Gastrocnemius medialis (tissue), 4 donors: ENCODE measurements at regions of chr1 and their contacts with region 1.

Region 1: DNA sequence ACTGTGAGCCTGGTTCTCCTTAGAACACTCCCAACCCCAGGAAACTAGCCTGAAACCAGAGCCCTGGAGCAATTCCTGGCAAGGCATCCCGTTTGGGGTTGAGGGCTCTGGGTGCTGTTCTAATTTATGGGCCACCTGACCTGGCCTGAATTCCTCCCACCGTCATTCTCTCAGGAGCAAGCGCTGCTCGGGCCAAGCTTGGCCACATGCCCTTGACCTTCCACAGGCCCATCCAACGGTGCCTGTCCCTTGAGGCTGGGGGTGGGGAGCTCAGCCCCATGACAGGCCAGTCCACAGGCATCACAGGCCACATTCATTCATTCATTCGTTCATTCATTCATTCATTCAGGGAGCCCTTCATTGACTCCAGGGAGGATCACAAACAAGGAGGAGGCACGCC is 5.3 kb downstream of the PADI2 start:
- DNase-seq: peak; percentile 95 to 99
- ATAC-seq: peak; percentile 79 to 82
- H3K4me3 ChIP-seq: peak overlapping the region in 1 of 4 donors; percentile 3
- H3K27ac ChIP-seq: peak overlapping the region; percentile 94 to 98 (median 96)
- H3K4me1 ChIP-seq: peaks cover 87 to 94% of the 10 kb centered on the region in 2 donors
- H3K27me3 ChIP-seq: no peaks in the 10 kb centered on the region
- CTCF ChIP-seq: no peak
- POLR2A ChIP-seq: peak in 1 of 2 donors; percentile 29

Region 2: GRCh38 chr1:17098446-17099251 is 15.3 kb before region 1 on chr1:
- in situ Hi-C with region 1: no loop called
- intact Hi-C with region 1: loop called (anchors 1 kb)
- DNase-seq: peak; percentile 98 to 100
- ATAC-seq: peak; percentile 76 to 84
- H3K4me3 ChIP-seq: no peak overlapping the region
- H3K27ac ChIP-seq: peak overlapping the region; percentile 89 to 97 (median 96)
- H3K4me1 ChIP-seq: peaks cover 55 to 88% of the 10 kb centered on the region in 2 donors
- H3K27me3 ChIP-seq: no peaks in the 10 kb centered on the region
- CTCF ChIP-seq: no peak
- POLR2A ChIP-seq: peak in 1 of 2 donors; percentile 17